Endothelial cell of umbilical vein (primary cell): ENCODE measurements at regions of chr4 and their contacts with region 1.

Region 1: GRCh38 chr4:89482248-89482647 is 174.6 kb upstream of the GPRIN3 start:
- DNase-seq: peak; percentile 88
- H3K4me3 ChIP-seq: no peak overlapping the region
- H3K27ac ChIP-seq: no peak overlapping the region
- H3K4me1 ChIP-seq: peaks cover 12% of the 10 kb centered on the region
- H3K27me3 ChIP-seq: no peaks in the 10 kb centered on the region
- CTCF ChIP-seq: peak; percentile 39 to 41
- POLR2A ChIP-seq: no peak

Region 2: GRCh38 chr4:89492581-89493071 is 10.4 kb after region 1 on chr4:
- CTCF ChIA-PET with region 1: interaction called, 17 read pairs
- POLR2A ChIA-PET with region 1: no interaction called
- dilution Hi-C with region 1: no loop called
- intact Hi-C with region 1: no loop called
- DNase-seq: peak; percentile 94
- H3K4me3 ChIP-seq: peak overlapping the region in 1 of 3 experiments; percentile 63
- H3K27ac ChIP-seq: peak overlapping the region; percentile 90
- H3K4me1 ChIP-seq: peaks cover 53% of the 10 kb centered on the region
- H3K27me3 ChIP-seq: no peaks in the 10 kb centered on the region
- CTCF ChIP-seq: no peak
- POLR2A ChIP-seq: no peak

Region 3: GRCh38 chr4:89558147-89558546 is 75.9 kb after region 1 on chr4:
- CTCF ChIA-PET with region 1: interaction called, 32 read pairs
- POLR2A ChIA-PET with region 1: no interaction called
- dilution Hi-C with region 1: no loop called
- intact Hi-C with region 1: no loop called
- DNase-seq: no peak
- H3K4me3 ChIP-seq: no peak overlapping the region
- H3K27ac ChIP-seq: no peak overlapping the region
- H3K4me1 ChIP-seq: peaks cover 2% of the 10 kb centered on the region
- H3K27me3 ChIP-seq: no peaks in the 10 kb centered on the region
- CTCF ChIP-seq: peak in 1 of 2 donors; percentile 5
- POLR2A ChIP-seq: no peak

Region 4: DNA sequence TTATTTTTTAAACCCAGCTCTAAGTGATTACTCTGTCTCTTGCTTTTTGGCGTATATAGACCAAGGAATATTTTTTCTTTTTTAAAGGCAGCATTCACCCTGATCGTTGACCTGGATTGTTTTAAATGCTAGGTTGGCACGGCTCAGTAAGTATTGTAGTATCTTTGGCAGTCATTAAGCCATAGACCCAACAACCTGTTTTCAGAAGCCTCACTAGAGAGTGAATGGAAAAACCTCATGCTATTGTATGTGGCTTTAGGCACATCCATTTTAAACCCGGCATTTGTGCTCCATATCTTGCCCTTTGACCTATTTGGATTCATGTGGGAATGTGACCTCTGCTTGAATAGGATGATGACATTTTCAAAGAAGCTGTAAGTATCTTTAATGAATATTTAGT is 170.8 kb after region 1 on chr4:
- CTCF ChIA-PET with region 1: interaction called, 49 read pairs
- POLR2A ChIA-PET with region 1: no interaction called
- dilution Hi-C with region 1: no loop called
- intact Hi-C with region 1: loop called (anchors 1 kb)
- DNase-seq: peak; percentile 71
- H3K4me3 ChIP-seq: no peak overlapping the region
- H3K27ac ChIP-seq: no peak overlapping the region
- H3K4me1 ChIP-seq: no peaks in the 10 kb centered on the region
- H3K27me3 ChIP-seq: no peaks in the 10 kb centered on the region
- CTCF ChIP-seq: no peak
- POLR2A ChIP-seq: no peak

Region 5: GRCh38 chr4:89737888-89738287 is 255.6 kb after region 1 on chr4:
- CTCF ChIA-PET with region 1: interaction called, 12 read pairs
- POLR2A ChIA-PET with region 1: no interaction called
- dilution Hi-C with region 1: no loop called
- intact Hi-C with region 1: no loop called
- DNase-seq: peak; percentile 79
- H3K4me3 ChIP-seq: no peak overlapping the region
- H3K27ac ChIP-seq: no peak overlapping the region
- H3K4me1 ChIP-seq: peaks cover 7% of the 10 kb centered on the region
- H3K27me3 ChIP-seq: no peaks in the 10 kb centered on the region
- CTCF ChIP-seq: no peak
- POLR2A ChIP-seq: no peak

Region 6: GRCh38 chr4:89765966-89766365 is 283.7 kb after region 1 on chr4:
- CTCF ChIA-PET with region 1: no interaction called
- POLR2A ChIA-PET with region 1: no interaction called
- dilution Hi-C with region 1: no loop called
- intact Hi-C with region 1: no loop called
- DNase-seq: peak; percentile 65
- H3K4me3 ChIP-seq: no peak overlapping the region
- H3K27ac ChIP-seq: no peak overlapping the region
- H3K4me1 ChIP-seq: no peaks in the 10 kb centered on the region
- H3K27me3 ChIP-seq: no peaks in the 10 kb centered on the region
- CTCF ChIP-seq: no peak
- POLR2A ChIP-seq: no peak

Region 7: DNA sequence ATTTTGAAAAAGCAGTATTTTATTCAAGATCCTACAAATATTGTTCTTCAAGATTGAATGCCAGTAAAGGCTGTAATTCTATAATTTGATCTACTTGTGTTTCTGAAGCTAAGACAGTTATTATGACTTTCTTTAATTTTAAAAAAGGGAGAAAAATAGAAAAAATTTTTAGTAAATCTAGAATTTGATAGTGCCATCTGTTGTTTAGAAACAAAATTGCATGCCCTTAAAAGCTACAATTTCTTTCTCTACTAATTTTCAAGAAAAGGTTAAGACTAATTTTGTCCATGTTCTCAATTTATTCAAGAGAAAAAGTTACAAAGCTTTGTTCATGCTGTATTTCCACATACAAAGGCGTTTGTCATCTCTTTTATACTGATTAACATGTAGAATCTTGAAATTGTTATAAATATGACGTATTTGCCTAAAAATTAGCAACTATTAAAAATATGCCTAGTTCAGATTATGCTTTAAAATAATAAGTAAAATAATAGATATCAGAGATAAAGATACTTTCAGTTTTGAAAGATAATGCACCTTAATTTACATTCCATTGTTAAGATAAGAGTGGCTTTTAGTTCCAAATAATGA is 386.8 kb after region 1 on chr4:
- CTCF ChIA-PET with region 1: interaction called, 78 read pairs
- POLR2A ChIA-PET with region 1: interaction called, 3 read pairs
- dilution Hi-C with region 1: no loop called
- intact Hi-C with region 1: loop called (anchors 1 kb)
- DNase-seq: peak; percentile 31
- H3K4me3 ChIP-seq: no peak overlapping the region
- H3K27ac ChIP-seq: no peak overlapping the region
- H3K4me1 ChIP-seq: no peaks in the 10 kb centered on the region
- H3K27me3 ChIP-seq: no peaks in the 10 kb centered on the region
- CTCF ChIP-seq: peak in 1 of 2 donors; percentile 30
- POLR2A ChIP-seq: no peak

Region 8: DNA sequence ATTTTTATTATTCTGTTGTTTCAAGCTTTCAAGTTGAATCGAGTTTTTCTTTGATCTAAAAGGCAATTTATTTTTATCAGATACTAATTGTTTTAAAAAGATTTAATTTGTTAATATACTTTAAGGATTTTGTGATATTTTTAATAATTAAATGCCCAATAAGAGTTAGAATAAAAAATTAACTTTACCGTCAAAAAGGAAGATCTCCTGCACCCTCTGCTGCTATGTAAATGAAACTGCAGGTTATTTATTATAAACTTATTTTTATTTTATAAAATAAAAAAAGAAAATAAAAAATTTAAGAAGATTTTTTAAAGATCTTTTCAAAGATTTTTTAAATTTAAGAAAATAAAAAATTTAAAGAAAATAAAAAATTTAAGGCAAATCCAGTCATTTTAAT is 811.1 kb after region 1 on chr4:
- CTCF ChIA-PET with region 1: interaction called, 8 read pairs
- POLR2A ChIA-PET with region 1: no interaction called
- dilution Hi-C with region 1: no loop called
- intact Hi-C with region 1: loop called (anchors 2 kb)
- DNase-seq: peak; percentile 23
- H3K4me3 ChIP-seq: no peak overlapping the region
- H3K27ac ChIP-seq: no peak overlapping the region
- H3K4me1 ChIP-seq: no peaks in the 10 kb centered on the region
- H3K27me3 ChIP-seq: no peaks in the 10 kb centered on the region
- CTCF ChIP-seq: peak; percentile 11 to 13
- POLR2A ChIP-seq: no peak